GM12878 (cell line): ENCODE measurements at regions of chr15 and their contacts with region 1.

Region 1: DNA sequence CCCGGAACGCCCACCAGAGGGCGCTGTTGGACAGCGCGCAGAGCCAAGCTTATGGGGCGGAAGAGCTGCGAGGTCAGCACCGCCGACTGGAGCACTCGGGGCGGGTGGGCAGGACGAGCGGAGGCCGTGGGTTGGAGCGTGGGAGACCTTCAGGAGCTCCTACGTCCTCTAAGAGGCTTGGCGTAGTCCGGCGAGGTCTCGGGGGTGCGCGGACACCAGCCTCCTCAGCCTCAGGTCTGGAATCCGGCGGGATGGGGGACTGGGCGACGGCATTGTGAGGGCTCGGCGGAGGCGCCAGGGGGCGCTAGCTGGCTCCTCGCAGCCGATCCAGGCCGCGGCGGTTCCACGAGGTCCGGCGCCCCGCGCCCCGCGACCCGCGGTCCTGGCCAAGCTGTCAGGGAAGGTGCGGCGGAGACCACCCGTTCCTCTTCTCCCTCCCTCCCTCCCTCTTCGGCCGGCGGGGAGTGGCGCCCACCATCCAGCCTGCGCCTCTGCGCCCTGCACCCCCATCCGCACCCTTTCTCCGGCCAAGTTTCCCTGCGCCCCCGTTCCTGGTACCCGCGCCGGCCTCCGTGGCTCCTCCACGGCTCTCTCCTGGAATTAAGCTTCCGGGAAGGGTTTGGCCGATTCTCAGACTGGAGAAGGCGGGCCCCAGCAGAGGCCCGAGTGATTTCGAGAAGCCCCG is 24.3 kb upstream of the POLG start:
- DNase-seq: peak; percentile 40
- ATAC-seq: peak; percentile 96
- H3K4me3 ChIP-seq: peak overlapping the region; percentile 67; the same call in 1 of the 2 replicates
- H3K27ac ChIP-seq: no peak overlapping the region
- H3K4me1 ChIP-seq: no peaks in the 10 kb centered on the region
- H3K27me3 ChIP-seq: peaks cover 12 to 35% of the 10 kb centered on the region in 2 experiments
- CTCF ChIP-seq: peak; percentile 82 to 93 (median 89)
- EP300 ChIP-seq: no peak
- POLR2A ChIP-seq: no peak
- RAD21 ChIP-seq: peak; percentile 89

Region 2: DNA sequence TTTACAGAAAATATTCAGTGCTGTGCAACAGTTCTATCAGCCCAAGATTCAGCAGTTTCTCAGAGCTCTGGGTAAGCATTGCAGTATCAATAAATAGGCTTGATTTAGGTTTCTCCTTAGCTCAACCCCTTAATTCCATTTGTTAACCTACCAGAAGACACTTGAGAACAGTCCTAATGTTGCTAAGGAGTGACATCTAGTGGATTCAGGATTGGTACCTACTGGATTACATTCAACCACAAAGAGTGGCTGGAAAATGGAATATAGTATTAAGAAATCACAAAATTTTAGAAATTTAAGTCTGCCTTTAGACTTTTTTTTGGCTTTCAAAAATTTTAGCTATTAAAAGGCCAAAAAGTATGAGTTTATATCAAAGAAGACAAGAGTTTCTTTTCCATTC is 59.0 kb before region 1 on chr15:
- CTCF ChIA-PET with region 1: no interaction called
- POLR2A ChIA-PET with region 1: no interaction called
- RAD21 ChIA-PET with region 1: no interaction called
- SMC1A ChIA-PET with region 1: no interaction called
- in situ Hi-C with region 1: no loop called
- intact Hi-C with region 1: no loop called
- DNase-seq: no peak
- ATAC-seq: no peak
- H3K4me3 ChIP-seq: no peak overlapping the region
- H3K27ac ChIP-seq: no peak overlapping the region
- H3K4me1 ChIP-seq: no peaks in the 10 kb centered on the region
- H3K27me3 ChIP-seq: no peaks in the 10 kb centered on the region
- CTCF ChIP-seq: peak in 2 of 3 experiments; percentile 4 to 28; a peak in 2 of 6 replicates
- EP300 ChIP-seq: no peak
- POLR2A ChIP-seq: no peak
- RAD21 ChIP-seq: peak; percentile 17; the same call in 1 of the 2 replicates

Region 3: DNA sequence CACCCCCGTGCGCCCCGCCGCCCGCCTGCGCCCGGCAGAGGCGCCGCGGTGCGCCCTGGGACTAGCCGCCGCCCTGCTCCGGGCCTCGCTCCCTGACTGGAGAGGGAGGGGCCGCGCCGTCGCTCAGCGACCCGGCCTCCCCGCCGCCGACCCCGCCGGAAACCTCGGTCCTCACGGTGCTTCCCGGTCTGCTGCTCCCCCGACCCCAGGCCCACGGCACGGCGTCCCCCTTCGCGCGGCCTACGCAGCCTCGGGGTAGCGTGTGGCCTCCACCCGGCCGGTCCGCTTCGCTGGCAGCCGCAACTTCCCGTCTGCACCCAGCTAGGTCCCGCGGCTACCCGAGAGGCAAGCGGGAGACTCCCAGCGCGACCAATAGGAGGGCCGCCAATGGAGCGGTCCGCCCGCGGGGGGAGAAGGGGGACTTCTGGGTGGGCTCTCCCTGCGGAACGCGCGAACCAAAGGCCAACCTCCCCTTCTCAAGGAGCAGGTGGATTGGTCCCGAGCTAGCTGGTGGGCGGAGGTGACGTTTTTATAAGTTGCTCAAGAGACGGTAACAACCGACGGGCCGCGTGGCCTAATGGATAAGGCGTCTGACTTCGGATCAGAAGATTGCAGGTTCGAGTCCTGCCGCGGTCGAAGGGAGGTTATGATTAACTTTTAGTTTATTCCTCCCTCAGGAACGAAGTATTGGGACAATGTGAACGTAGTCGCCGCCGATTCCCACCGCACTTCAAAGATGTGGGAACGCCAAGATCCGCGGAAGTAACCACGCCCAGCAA is 24.2 kb before region 1 on chr15 and contains the start of gene POLG:
- CTCF ChIA-PET with region 1: interaction called, 116 read pairs
- POLR2A ChIA-PET with region 1: no interaction called
- RAD21 ChIA-PET with region 1: interaction called, 4 read pairs
- SMC1A ChIA-PET with region 1: interaction called, 7 read pairs
- in situ Hi-C with region 1: no loop called
- intact Hi-C with region 1: no loop called
- DNase-seq: peak; percentile 98
- ATAC-seq: peak; percentile 94
- H3K4me3 ChIP-seq: peak within 1 kb of the TSS; percentile 76
- H3K27ac ChIP-seq: peak within 1 kb of the TSS; percentile 90
- H3K4me1 ChIP-seq: peaks cover 30% of the 10 kb centered on the region
- H3K27me3 ChIP-seq: no peaks in the 10 kb centered on the region
- CTCF ChIP-seq: no peak
- EP300 ChIP-seq: peak; percentile 54 to 57; a peak in 3 of 4 replicates
- POLR2A ChIP-seq: peak; percentile 100
- RAD21 ChIP-seq: no peak
- polyA plus RNA-seq, gene POLG: 14.8 to 21.6 TPM

Region 4: GRCh38 chr15:89383365-89384175 is 24.7 kb after region 1 on chr15:
- CTCF ChIA-PET with region 1: interaction called, 12 read pairs
- POLR2A ChIA-PET with region 1: no interaction called
- RAD21 ChIA-PET with region 1: interaction called, 3 read pairs
- SMC1A ChIA-PET with region 1: no interaction called
- in situ Hi-C with region 1: no loop called
- intact Hi-C with region 1: no loop called
- DNase-seq: no peak
- ATAC-seq: no peak
- H3K4me3 ChIP-seq: no peak overlapping the region
- H3K27ac ChIP-seq: no peak overlapping the region
- H3K4me1 ChIP-seq: no peaks in the 10 kb centered on the region
- H3K27me3 ChIP-seq: peaks cover 7 to 14% of the 10 kb centered on the region in 2 experiments; a peak in 3 of 4 replicates
- CTCF ChIP-seq: no peak
- EP300 ChIP-seq: no peak
- POLR2A ChIP-seq: no peak
- RAD21 ChIP-seq: no peak

Region 5: DNA sequence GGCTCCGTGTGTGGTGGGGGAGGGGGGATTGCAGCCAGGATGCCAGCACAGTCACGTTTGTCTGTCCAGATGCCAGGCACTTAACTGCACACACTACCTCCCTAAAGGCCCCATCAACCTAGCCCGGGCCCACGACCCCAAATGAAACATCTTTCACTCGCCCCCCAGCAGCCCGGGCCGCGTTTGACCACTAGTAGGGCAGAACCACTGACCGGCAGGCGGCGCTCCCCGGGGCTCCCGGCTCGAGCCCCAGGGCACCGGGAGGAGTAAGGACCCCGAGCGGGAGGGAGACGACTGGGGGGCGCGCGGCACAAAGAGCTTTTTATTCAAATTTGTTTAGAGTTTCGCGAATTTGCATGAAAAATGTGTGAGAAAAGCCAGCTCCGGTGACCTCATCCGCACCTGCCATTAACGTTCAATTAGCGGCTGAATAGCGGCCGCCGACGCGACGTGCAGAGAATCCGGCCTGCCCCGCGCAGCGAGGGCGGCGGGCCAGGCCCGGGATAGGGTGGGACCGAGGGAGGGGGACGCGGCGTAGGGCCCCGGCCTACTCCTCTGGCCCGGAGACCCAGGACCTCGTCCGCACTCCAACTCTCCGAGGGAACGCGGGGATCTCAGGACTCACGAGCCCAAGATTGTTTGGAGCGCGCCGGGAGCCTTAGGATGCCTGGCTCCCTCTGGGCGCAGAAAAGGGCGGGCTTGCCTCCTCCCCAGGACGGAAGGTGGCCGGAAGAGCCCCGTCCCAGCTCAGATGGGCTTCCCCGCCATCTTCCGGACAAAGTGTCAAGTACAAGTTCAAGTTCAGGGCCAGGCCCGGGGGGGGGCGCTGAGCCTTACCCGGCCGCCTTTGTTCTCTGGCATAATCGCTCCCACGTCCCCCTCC is 40.6 kb after region 1 on chr15:
- CTCF ChIA-PET with region 1: interaction called, 68 read pairs
- POLR2A ChIA-PET with region 1: no interaction called
- RAD21 ChIA-PET with region 1: interaction called, 4 read pairs
- SMC1A ChIA-PET with region 1: interaction called, 3 read pairs
- in situ Hi-C with region 1: no loop called
- intact Hi-C with region 1: no loop called
- DNase-seq: no peak
- ATAC-seq: peak; percentile 87
- H3K4me3 ChIP-seq: peak overlapping the region; percentile 69
- H3K27ac ChIP-seq: peak overlapping the region; percentile 49; the same call in 1 of the 2 replicates
- H3K4me1 ChIP-seq: peaks cover 13% of the 10 kb centered on the region; the same call in 1 of the 2 replicates
- H3K27me3 ChIP-seq: no peaks in the 10 kb centered on the region
- CTCF ChIP-seq: peak; percentile 52 to 75 (median 67)
- EP300 ChIP-seq: no peak
- POLR2A ChIP-seq: peak; percentile 74
- RAD21 ChIP-seq: peak; percentile 29; the same call in 1 of the 2 replicates

Region 6: GRCh38 chr15:89423981-89424380 is 65.1 kb after region 1 on chr15:
- CTCF ChIA-PET with region 1: interaction called, 94 read pairs
- POLR2A ChIA-PET with region 1: no interaction called
- RAD21 ChIA-PET with region 1: interaction called, 3 read pairs
- SMC1A ChIA-PET with region 1: interaction called, 3 read pairs
- in situ Hi-C with region 1: no loop called
- intact Hi-C with region 1: no loop called
- DNase-seq: no peak
- ATAC-seq: no peak
- H3K4me3 ChIP-seq: no peak overlapping the region
- H3K27ac ChIP-seq: no peak overlapping the region
- H3K4me1 ChIP-seq: no peaks in the 10 kb centered on the region
- H3K27me3 ChIP-seq: peaks cover 0 to 2% of the 10 kb centered on the region in 2 experiments; a peak in 1 of 4 replicates
- CTCF ChIP-seq: no peak
- EP300 ChIP-seq: no peak
- POLR2A ChIP-seq: no peak
- RAD21 ChIP-seq: no peak

Region 7: GRCh38 chr15:89442671-89443307 is 83.9 kb after region 1 on chr15:
- CTCF ChIA-PET with region 1: interaction called, 23 read pairs
- POLR2A ChIA-PET with region 1: no interaction called
- RAD21 ChIA-PET with region 1: interaction called, 5 read pairs
- SMC1A ChIA-PET with region 1: interaction called, 12 read pairs
- in situ Hi-C with region 1: no loop called
- intact Hi-C with region 1: no loop called
- DNase-seq: no peak
- ATAC-seq: peak; percentile 70
- H3K4me3 ChIP-seq: no peak overlapping the region
- H3K27ac ChIP-seq: no peak overlapping the region
- H3K4me1 ChIP-seq: peaks cover 17% of the 10 kb centered on the region
- H3K27me3 ChIP-seq: no peaks in the 10 kb centered on the region
- CTCF ChIP-seq: peak; percentile 56 to 72 (median 71)
- EP300 ChIP-seq: no peak
- POLR2A ChIP-seq: no peak
- RAD21 ChIP-seq: peak; percentile 56

Region 8: DNA sequence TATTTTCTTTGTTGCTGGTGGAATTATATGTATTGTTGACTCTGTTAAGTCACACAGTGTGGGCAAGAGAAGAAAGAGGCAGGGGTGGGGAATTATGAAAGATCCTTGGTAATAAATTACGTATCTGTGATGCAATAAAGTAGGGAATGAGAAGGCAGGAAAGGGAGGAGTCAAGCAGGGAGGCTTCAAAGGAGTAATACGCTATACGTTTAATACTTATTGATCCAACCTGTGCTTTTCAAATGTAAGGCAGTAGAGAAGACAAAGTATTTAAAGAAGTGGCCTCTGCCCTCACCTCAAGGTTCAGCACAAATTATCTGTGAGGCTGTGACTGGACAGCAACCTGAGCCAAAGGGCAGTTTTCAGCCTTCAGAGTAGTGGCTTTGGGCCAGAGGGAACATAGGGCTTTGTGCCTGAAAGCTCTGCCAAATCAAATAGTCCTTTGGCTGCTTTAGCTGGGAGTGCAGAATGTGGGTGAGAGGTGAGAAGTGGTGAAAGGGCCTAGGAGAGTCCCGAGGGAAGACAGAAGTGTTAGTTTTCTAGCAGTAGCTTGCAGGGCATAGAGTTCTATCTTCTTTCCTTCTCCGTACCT is 321.5 kb after region 1 on chr15:
- CTCF ChIA-PET with region 1: no interaction called
- POLR2A ChIA-PET with region 1: no interaction called
- RAD21 ChIA-PET with region 1: no interaction called
- SMC1A ChIA-PET with region 1: no interaction called
- in situ Hi-C with region 1: no loop called
- intact Hi-C with region 1: no loop called
- DNase-seq: no peak
- ATAC-seq: no peak
- H3K4me3 ChIP-seq: no peak overlapping the region
- H3K27ac ChIP-seq: no peak overlapping the region
- H3K4me1 ChIP-seq: no peaks in the 10 kb centered on the region
- H3K27me3 ChIP-seq: no peaks in the 10 kb centered on the region
- CTCF ChIP-seq: no peak
- EP300 ChIP-seq: no peak
- POLR2A ChIP-seq: no peak
- RAD21 ChIP-seq: no peak